ENCODE measurements at regions of chr10 and their contacts with region 1.

Region 1: DNA sequence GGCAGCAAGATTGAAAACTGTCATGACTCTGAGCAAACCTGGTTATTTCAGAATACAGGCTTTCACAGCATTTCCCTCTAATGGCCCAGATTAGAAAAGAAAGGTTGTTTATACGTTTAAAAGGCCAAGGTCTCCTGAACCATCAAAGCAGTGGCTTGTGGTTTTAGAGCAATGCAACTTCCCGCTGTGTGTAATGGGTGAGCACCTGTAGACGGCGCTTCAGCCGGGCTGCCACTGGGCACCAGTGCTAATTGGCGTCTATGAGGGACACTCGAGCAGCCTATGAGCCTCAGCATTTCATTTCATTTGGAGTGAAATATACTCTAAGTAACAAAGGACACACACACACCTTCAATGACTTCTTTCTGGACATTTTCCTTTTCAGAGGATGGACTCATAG is 671.0 kb upstream of the FZD8 start:
- DNase-seq: no peak
- ATAC-seq: no peak
- H3K4me3 ChIP-seq: no peak overlapping the region
- H3K27ac ChIP-seq: no peak overlapping the region
- H3K4me1 ChIP-seq: no peaks in the 10 kb centered on the region
- H3K27me3 ChIP-seq: no peaks in the 10 kb centered on the region
- CTCF ChIP-seq: no peak
- POLR2A ChIP-seq: no peak
- RAD21 ChIP-seq: no peak

Region 2: DNA sequence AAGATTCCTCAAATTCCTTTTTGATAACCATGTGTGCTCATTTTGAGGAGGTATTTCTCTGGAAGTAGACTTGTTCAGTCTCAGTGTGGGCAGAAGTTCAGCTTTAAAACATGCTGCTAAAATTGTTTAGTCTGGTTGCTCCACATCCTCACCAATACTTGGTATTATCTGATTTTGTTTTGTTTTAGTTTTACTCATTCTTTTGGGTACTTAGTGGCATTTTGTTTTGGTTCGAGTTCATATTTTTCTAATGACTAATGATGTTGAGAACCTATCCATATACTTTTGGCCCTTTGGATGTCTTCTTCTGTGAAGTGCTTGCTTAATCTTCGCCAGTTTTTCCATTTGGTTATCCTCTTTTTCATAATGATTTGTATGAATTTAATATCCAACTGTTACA is 23.2 kb after region 1 on chr10:
- CTCF ChIA-PET with region 1: interaction called, 3 read pairs
- POLR2A ChIA-PET with region 1: interaction called, 11 read pairs
- dilution Hi-C with region 1: no loop called
- in situ Hi-C with region 1: no loop called
- intact Hi-C with region 1: no loop called
- DNase-seq: peak; percentile 54
- ATAC-seq: peak; percentile 53; the same call in 1 of the 2 replicates
- H3K4me3 ChIP-seq: no peak overlapping the region
- H3K27ac ChIP-seq: no peak overlapping the region
- H3K4me1 ChIP-seq: peaks cover 7% of the 10 kb centered on the region
- H3K27me3 ChIP-seq: no peaks in the 10 kb centered on the region
- CTCF ChIP-seq: no peak
- POLR2A ChIP-seq: no peak
- RAD21 ChIP-seq: no peak